ENCODE measurements at regions of chr15 and their contacts with region 1.

Region 1: GRCh38 chr15:94258246-94258645 is 26.9 kb downstream of the MCTP2 start:
- DNase-seq: peak; percentile 91
- H3K4me3 ChIP-seq: peak overlapping the region; percentile 43
- H3K27ac ChIP-seq: peak overlapping the region; percentile 97
- H3K4me1 ChIP-seq: peaks cover 98% of the 10 kb centered on the region
- CTCF ChIP-seq: no peak

Region 2: GRCh38 chr15:94230956-94231722 is 27.1 kb before region 1 on chr15 and contains the start of gene MCTP2:
- CTCF ChIA-PET with region 1: interaction called, 3 read pairs
- POLR2A ChIA-PET with region 1: interaction called, 80 read pairs
- intact Hi-C with region 1: loop called (anchors 1 kb)
- DNase-seq: peak; percentile 95
- H3K4me3 ChIP-seq: peak within 1 kb of the TSS; percentile 86
- H3K27ac ChIP-seq: peak within 1 kb of the TSS; percentile 81
- H3K4me1 ChIP-seq: peaks cover 60% of the 10 kb centered on the region
- CTCF ChIP-seq: peak; percentile 60
- total RNA-seq, gene MCTP2: 73.2 and 75.0 TPM in 2 replicates

Region 3: GRCh38 chr15:94238539-94239118 is 19.6 kb before region 1 on chr15:
- CTCF ChIA-PET with region 1: no interaction called
- POLR2A ChIA-PET with region 1: interaction called, 80 read pairs
- intact Hi-C with region 1: loop called (anchors 1 kb)
- DNase-seq: peak; percentile 84
- H3K4me3 ChIP-seq: peak overlapping the region; percentile 12
- H3K27ac ChIP-seq: peak overlapping the region; percentile 73
- H3K4me1 ChIP-seq: peaks cover 82% of the 10 kb centered on the region
- CTCF ChIP-seq: no peak

Region 4: GRCh38 chr15:94297558-94297957 is 39.3 kb after region 1 on chr15:
- CTCF ChIA-PET with region 1: no interaction called
- POLR2A ChIA-PET with region 1: interaction called, 16 read pairs
- intact Hi-C with region 1: loop called (anchors 2 kb)
- DNase-seq: peak; percentile 90
- H3K4me3 ChIP-seq: peak overlapping the region; percentile 54
- H3K27ac ChIP-seq: peak overlapping the region; percentile 91
- H3K4me1 ChIP-seq: peaks cover 74% of the 10 kb centered on the region
- CTCF ChIP-seq: no peak; the same call in 1 of the 2 replicates

Region 5: GRCh38 chr15:94306700-94307650 is 48.7 kb after region 1 on chr15:
- CTCF ChIA-PET with region 1: interaction called, 4 read pairs
- POLR2A ChIA-PET with region 1: interaction called, 25 read pairs
- intact Hi-C with region 1: loop called (anchors 2 kb)
- DNase-seq: peak; percentile 91
- H3K4me3 ChIP-seq: peak overlapping the region; percentile 28
- H3K27ac ChIP-seq: peak overlapping the region; percentile 86
- H3K4me1 ChIP-seq: peaks cover 62% of the 10 kb centered on the region
- CTCF ChIP-seq: no peak; the same call in 1 of the 2 replicates

Region 6: DNA sequence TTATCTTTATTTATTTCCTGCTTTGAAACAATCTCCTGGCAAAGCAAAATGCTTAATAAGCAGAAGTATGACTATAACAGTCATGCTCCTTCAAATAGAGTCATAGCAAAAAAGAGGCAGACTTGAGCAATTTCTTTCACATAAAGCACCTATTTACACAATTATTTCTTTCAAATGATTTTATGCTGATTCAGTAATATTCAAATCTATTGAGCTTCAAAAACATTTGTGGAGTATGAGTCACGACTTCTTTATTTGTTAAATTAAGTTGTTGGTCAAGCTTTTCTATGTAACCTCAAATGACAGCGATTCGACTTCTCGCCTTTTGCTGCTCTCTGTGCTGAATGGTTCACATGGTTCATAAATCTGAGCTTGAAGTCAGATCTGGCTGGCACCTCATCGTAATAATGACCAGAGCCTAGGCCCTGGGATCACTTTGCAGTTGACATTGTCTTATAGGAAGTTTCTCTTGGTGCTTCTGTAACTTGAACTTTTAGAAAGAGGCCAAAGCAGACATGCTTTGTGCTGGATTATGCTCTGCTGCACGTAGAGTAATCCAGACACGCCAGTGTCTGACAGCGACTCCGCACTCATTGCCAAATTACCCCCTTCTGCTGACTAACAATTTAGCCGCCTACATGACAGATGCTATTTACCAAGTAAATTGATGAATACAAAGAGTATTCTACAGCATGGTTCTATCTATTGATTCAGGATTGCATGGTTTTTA is 112.1 kb after region 1 on chr15:
- CTCF ChIA-PET with region 1: no interaction called
- POLR2A ChIA-PET with region 1: no interaction called
- intact Hi-C with region 1: no loop called
- DNase-seq: no peak
- H3K4me3 ChIP-seq: no peak overlapping the region
- H3K27ac ChIP-seq: no peak overlapping the region
- H3K4me1 ChIP-seq: no peaks in the 10 kb centered on the region
- CTCF ChIP-seq: no peak